Left cardiac atrium (tissue), 4 donors: ENCODE measurements at regions of chr3 and their contacts with region 1.

Region 1: DNA sequence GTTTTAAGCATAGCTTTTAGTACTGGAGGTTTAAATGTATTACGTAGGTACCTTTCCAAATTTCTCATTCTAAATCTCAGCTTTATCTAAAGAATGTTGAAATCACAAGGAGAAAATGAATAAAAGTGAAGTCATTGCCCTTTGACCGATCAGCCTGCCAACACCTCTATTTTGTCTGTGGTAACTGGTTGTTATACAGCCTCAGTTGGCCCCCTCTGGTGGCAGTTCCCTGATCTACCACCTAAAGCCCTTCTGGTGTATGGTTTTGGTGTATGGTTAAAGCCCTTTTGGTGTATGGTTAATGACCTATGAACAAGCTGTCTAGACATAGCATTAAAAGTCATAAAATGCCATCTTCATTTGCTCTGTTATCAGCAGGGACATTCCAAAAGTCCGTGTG is 378.2 kb upstream of the AZI2 start:
- DNase-seq: peak; percentile 53
- ATAC-seq: peak; percentile 67 to 89

Region 2: DNA sequence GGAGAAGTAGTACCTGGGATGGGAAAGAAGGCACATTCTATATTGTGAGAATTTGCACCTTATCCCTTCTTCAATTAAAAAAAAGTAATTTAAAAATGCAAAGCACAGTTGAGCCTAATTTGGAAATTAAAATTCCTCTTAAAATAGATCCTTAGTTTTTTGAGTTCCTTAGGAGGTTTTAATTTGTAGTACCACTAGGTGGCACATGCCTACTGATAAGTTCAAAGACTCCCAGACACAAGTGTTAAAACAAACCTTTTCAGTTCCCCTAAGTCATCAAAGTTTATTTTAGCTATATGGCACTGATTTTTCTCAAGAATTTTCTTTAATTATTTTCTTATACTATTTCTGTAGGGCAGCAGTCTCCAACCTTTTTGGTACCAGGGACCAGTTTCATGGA is 250.6 kb before region 1 on chr3:
- intact Hi-C with region 1: loop called in 1 of 2 experiments (anchors 5 kb)
- DNase-seq: no peak
- ATAC-seq: no peak

Region 3: DNA sequence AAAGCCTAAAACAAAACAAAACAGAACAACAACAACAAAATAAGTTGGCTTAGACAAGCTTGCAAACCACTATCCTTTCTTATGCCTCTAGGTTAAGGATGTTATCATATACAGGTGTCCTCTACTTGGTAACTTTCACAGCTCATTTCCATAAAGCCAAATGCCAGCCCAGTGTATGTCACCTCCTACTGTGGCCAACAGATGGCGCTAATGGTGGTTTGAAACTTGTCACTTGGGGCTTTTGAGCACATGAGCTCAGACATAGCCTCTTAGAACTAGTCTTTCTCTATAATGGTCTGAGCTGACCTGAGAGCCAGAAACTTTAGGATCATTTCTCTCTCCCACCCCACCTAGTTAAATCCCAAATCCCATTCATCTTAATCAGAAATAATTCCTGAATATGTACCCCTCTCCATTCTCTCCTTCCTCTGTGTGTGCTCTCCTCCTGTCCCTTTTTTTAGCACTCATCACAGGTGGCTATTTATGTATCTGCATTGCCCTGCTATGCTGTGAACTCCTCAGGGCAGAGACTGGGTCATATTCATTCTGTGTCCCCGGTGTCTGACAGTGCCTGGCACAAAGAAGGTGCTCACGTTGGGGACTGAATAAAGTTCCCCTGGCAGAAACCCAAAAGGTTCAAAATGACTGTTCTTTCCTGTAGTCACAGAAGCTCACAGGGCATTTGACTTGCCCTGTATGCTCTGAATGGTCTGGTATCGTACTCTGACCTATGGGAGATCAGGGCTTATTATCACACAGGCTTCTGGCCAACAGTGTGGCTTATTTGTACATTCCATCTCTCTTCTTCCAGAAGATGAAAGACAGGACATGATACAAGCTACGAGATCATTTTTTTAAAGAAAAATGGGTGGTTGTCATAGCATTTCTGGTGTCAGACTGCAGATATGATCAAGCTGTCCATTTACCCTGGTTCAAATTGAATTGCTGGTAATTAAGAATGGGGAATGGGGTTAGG is 58.9 kb before region 1 on chr3:
- intact Hi-C with region 1: loop called in 1 of 2 experiments (anchors 5 kb)
- DNase-seq: peak; percentile 48
- ATAC-seq: peak; percentile 86 to 92